HepG2 (cell line): ENCODE measurements at regions of chr10 and their contacts with region 1.

Region 1: DNA sequence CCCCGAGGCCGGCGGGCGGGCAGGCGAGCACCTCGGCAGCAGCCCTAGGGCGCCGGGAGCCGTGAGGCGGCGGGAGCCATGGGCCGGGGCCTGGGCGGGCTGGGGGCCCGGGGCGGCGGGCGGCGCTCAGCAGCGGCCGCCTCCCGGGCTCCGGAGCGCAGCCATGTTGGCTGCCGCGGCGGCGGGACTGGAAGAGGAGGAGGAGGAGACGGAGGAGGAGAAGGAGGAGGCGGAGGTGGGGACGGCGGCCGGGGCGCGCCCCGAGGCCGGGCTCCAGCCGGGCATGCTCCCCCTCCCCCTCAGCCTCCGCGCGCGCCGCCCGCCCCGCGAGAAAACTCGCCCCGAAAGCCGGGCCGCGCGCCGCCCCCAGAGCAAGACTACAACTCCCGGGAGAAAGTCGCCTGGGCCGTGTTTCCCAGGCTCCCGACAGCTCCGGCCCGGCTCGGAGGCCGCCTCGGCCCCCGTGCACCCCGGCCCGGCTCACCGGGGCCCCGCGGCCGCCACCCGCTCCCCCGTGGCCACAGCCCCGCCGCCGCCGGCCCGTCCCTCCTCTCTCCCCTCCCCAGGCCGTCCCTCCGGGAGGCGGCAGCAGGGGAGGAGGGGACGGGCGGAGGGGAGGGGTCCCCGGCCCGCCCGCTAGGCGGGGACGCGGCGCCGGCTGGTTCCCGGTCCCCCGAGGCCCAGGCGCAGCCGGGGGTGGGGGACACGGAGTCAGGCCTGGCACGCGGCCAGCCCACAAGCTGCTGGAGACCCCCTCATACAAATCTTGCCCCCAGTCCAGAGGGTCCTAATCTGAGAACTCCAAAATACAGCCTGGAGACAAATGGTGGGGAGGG is at the start of gene DLG5:
- DNase-seq: no peak
- ATAC-seq: peak; percentile 50
- H3K4me3 ChIP-seq: peak within 1 kb of the TSS; percentile 73 to 92 (median 89)
- H3K27ac ChIP-seq: peak within 1 kb of the TSS; percentile 57
- H3K4me1 ChIP-seq: peaks cover 54% of the 10 kb centered on the region
- H3K27me3 ChIP-seq: no peaks in the 10 kb centered on the region
- CTCF ChIP-seq: peak; percentile 30; the same call in 1 of the 2 replicates
- EP300 ChIP-seq: no peak
- POLR2A ChIP-seq: no peak
- RAD21 ChIP-seq: 0 out of 2 replicates have a peak, but pooled peaks have one; percentile 23
- total RNA-seq, gene DLG5: 15.1 and 15.5 TPM in 2 replicates

Region 2: GRCh38 chr10:77810446-77811335 is 116.1 kb before region 1 on chr10:
- CTCF ChIA-PET with region 1: no interaction called
- POLR2A ChIA-PET with region 1: no interaction called
- in situ Hi-C with region 1: no loop called
- intact Hi-C with region 1: no loop called
- DNase-seq: no peak
- ATAC-seq: no peak
- H3K4me3 ChIP-seq: no peak overlapping the region
- H3K27ac ChIP-seq: no peak overlapping the region
- H3K4me1 ChIP-seq: no peaks in the 10 kb centered on the region
- H3K27me3 ChIP-seq: no peaks in the 10 kb centered on the region; a peak in 1 of 5 replicates
- CTCF ChIP-seq: no peak
- EP300 ChIP-seq: no peak
- POLR2A ChIP-seq: no peak
- RAD21 ChIP-seq: no peak

Region 3: DNA sequence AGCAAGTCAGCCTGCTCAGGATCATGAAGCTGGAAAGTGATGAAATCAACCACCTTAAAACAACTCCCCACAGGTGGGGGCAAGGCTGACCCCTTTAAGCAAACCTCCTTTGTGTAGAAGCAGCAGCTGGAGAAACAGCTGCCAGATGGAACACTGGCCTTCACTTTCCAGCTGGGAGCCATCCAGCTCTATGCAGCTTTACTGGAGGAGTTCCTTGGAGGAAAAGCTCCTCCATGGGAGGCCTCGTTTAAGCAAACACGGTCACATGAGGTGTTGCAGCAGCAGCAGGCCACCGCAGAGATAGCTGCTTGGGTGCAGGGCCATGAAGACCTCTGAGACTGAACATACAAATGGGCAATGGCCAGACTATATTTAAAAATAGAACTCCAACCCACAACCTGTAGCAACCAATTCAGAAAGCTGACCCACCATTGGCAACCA is 12.8 kb after region 1 on chr10:
- CTCF ChIA-PET with region 1: no interaction called
- POLR2A ChIA-PET with region 1: interaction called, 14 read pairs
- in situ Hi-C with region 1: no loop called
- intact Hi-C with region 1: no loop called
- DNase-seq: no peak
- ATAC-seq: peak; percentile 20
- H3K4me3 ChIP-seq: no peak overlapping the region
- H3K27ac ChIP-seq: no peak overlapping the region
- H3K4me1 ChIP-seq: peaks cover 48% of the 10 kb centered on the region
- H3K27me3 ChIP-seq: no peaks in the 10 kb centered on the region; a peak in 2 of 5 replicates
- CTCF ChIP-seq: no peak
- EP300 ChIP-seq: no peak
- POLR2A ChIP-seq: no peak
- RAD21 ChIP-seq: no peak

Region 4: GRCh38 chr10:77970869-77971803 is 44.4 kb after region 1 on chr10:
- CTCF ChIA-PET with region 1: no interaction called
- POLR2A ChIA-PET with region 1: interaction called, 3 read pairs
- in situ Hi-C with region 1: no loop called
- intact Hi-C with region 1: loop called (anchors 5 kb)
- DNase-seq: peak; percentile 92
- ATAC-seq: peak; percentile 84
- H3K4me3 ChIP-seq: no peak overlapping the region; a peak in 1 of 6 replicates
- H3K27ac ChIP-seq: peak overlapping the region; percentile 62
- H3K4me1 ChIP-seq: peaks cover 78% of the 10 kb centered on the region
- H3K27me3 ChIP-seq: no peaks in the 10 kb centered on the region
- CTCF ChIP-seq: 0 out of 2 replicates have a peak, but pooled peaks have one; percentile 10
- EP300 ChIP-seq: peak in 1 of 2 experiments; percentile 84; a peak in 2 of 4 replicates
- POLR2A ChIP-seq: no peak
- RAD21 ChIP-seq: no peak

Region 5: DNA sequence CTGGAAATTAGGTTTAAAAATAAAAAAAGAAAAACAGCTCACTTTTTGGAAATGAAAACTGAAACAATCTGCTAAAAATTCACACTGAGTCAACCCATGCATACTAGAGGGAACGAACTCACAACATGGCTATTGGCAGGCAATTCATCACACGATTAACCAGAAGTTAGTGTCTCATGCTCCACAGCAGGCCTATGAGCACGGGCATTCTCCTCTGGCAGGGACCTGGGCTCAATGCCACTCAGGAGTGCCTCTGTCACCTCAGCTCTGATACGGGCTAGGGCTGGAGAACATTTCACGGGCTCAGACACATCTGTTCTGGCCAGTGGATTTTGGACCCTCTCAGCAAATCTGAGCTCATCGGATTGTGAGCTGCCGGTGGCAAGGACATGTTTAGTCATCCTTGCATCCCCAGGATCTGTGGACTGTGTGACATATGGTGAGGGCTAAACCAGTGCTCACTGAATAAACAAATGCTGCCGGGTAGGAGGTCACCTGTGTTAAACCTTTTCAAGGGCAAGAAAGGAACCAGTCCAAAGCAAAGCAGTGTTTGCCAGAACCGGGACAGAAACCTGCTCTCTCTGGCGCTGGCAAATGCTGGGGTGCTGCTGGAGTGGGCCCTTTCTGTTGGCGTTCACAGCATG is 62.4 kb after region 1 on chr10:
- CTCF ChIA-PET with region 1: no interaction called
- POLR2A ChIA-PET with region 1: interaction called, 10 read pairs
- in situ Hi-C with region 1: no loop called
- intact Hi-C with region 1: no loop called
- DNase-seq: peak; percentile 94
- ATAC-seq: peak; percentile 99
- H3K4me3 ChIP-seq: peak overlapping the region in 1 of 3 experiments; percentile 17; a peak in 1 of 6 replicates
- H3K27ac ChIP-seq: peak overlapping the region; percentile 77
- H3K4me1 ChIP-seq: peaks cover 24% of the 10 kb centered on the region
- H3K27me3 ChIP-seq: no peaks in the 10 kb centered on the region
- CTCF ChIP-seq: 0 out of 2 replicates have a peak, but pooled peaks have one; percentile 12
- EP300 ChIP-seq: 0 out of 4 replicates have a peak, but pooled peaks of 1 of the 2 experiments have one; percentile 57
- POLR2A ChIP-seq: peak in 1 of 2 experiments; percentile 31; a peak in 1 of 4 replicates
- RAD21 ChIP-seq: peak; percentile 33; the same call in 1 of the 2 replicates

Region 6: DNA sequence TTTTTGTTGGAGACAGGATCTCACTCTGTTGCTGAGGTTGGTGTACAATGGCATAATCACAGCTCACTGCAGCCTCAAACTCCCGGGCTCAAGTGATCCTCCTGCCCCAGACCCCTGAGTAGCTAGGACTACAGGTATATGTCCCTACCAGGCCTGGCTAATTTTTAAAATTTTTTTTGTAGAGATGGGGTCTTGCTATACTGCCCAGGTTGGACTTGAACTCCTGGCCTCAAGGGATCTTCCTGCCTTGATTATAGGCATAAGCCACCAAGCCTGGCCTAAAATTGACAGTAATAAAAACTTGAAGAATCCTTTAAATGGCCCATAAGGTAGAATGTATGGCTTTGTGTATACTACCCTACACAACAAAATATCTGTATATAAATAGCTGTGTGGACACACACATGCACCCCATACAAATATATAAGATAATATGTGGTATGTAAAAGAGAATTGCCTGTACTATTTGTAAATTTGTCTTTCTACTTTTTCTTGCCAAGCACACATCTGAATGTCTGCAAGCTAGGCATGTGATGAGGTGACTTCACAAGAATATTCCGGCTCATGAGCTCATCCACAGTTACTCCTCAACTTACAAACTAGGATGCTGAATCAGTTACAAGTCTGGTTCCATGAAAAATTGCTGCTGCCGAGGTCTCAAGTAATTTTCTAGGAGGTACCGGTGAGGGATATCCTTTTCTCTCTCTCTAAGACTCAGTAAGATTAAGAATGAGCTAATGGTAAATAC is 75.9 kb after region 1 on chr10:
- CTCF ChIA-PET with region 1: no interaction called
- POLR2A ChIA-PET with region 1: no interaction called
- in situ Hi-C with region 1: no loop called
- intact Hi-C with region 1: no loop called
- DNase-seq: no peak
- ATAC-seq: no peak
- H3K4me3 ChIP-seq: no peak overlapping the region
- H3K27ac ChIP-seq: no peak overlapping the region
- H3K4me1 ChIP-seq: no peaks in the 10 kb centered on the region
- H3K27me3 ChIP-seq: no peaks in the 10 kb centered on the region
- CTCF ChIP-seq: no peak
- EP300 ChIP-seq: no peak
- POLR2A ChIP-seq: no peak
- RAD21 ChIP-seq: no peak